ENCODE measurements at regions of chr1 and their contacts with region 1.

Region 1: GRCh38 chr1:40774266-40774998 is 9.2 kb upstream of the KCNQ4 start:
- DNase-seq: peak; percentile 53
- ATAC-seq: peak; percentile 66
- H3K4me3 Mint-ChIP-seq: no peak overlapping the region
- H3K27ac Mint-ChIP-seq: no peak overlapping the region
- H3K4me1 Mint-ChIP-seq: no peaks in the 10 kb centered on the region
- H3K27me3 Mint-ChIP-seq: no peaks in the 10 kb centered on the region
- CTCF ChIP-seq: peak; percentile 57

Region 2: GRCh38 chr1:38997034-38997900 is 1777.2 kb before region 1 on chr1:
- CTCF ChIA-PET with region 1: no interaction called
- POLR2A ChIA-PET with region 1: no interaction called
- intact Hi-C with region 1: no loop called
- DNase-seq: no peak
- ATAC-seq: no peak
- H3K4me3 Mint-ChIP-seq: no peak overlapping the region
- H3K27ac Mint-ChIP-seq: peak overlapping the region; percentile 30
- H3K4me1 Mint-ChIP-seq: peaks cover 39% of the 10 kb centered on the region
- H3K27me3 Mint-ChIP-seq: no peaks in the 10 kb centered on the region
- CTCF ChIP-seq: no peak

Region 3: DNA sequence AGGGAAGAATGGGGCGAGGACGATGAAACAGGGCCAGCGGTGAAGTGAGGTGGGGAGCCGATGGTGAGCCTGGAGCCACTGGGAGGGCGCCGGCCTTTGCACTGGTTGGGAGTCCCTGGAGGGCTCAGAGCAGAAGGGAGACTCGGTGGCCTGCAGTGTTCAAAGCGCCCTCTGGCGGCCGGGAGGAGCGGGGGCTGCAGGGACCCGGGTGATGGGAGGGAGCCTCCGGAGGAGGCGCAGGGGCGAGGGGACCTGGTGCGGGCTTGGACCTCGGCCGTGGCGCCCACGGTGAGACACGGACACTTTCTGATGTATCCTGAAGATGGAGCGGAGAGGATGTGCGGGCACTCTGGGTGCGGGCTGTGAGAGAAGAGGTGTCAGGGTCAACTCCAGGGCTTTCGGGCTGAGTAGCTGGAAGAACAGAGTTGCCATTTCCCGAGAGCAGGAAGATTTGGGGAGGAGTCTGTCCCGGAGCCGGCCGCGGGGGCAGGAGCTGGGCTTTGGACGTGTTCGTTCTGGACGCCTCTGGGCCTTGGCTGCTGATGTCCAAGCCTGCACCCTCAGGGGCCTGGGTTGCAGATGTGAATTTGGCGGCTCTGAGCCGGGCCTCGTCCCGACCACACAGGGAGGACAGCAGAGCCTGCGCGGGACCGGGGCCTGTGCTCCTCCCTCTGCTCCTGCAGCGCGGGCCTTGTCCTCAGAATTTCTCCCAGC is 1164.7 kb before region 1 on chr1:
- CTCF ChIA-PET with region 1: no interaction called
- POLR2A ChIA-PET with region 1: no interaction called
- intact Hi-C with region 1: no loop called
- DNase-seq: peak; percentile 62
- ATAC-seq: peak; percentile 84
- H3K4me3 Mint-ChIP-seq: no peak overlapping the region
- H3K27ac Mint-ChIP-seq: no peak overlapping the region
- H3K4me1 Mint-ChIP-seq: peaks cover 11% of the 10 kb centered on the region
- H3K27me3 Mint-ChIP-seq: peaks cover 9% of the 10 kb centered on the region
- CTCF ChIP-seq: no peak

Region 4: GRCh38 chr1:40583980-40584379 is 190.5 kb before region 1 on chr1:
- CTCF ChIA-PET with region 1: no interaction called
- POLR2A ChIA-PET with region 1: no interaction called
- intact Hi-C with region 1: no loop called
- DNase-seq: no peak
- ATAC-seq: no peak
- H3K4me3 Mint-ChIP-seq: no peak overlapping the region
- H3K27ac Mint-ChIP-seq: no peak overlapping the region
- H3K4me1 Mint-ChIP-seq: no peaks in the 10 kb centered on the region
- H3K27me3 Mint-ChIP-seq: peaks cover 2% of the 10 kb centered on the region
- CTCF ChIP-seq: no peak

Region 5: DNA sequence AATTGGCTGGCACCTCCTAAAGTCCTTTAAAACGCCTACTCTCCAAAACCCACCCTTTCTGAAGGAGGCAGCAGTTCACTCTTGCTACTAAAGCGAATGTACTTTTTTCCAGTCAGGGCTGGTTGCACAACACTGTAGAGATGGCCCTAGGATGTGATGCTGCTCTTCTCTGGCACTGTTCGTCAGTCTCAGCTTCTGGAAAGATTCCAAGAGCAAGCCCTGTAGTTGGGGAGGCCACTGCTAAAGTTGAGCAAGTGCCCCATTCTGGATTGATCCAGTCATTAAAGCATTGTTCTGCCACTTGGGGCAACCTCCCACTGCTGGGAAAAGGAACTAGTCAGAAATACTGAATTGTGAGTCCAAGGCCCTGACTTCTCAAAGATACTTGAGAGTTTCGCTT is 19.4 kb before region 1 on chr1:
- CTCF ChIA-PET with region 1: interaction called, 15 read pairs
- POLR2A ChIA-PET with region 1: no interaction called
- intact Hi-C with region 1: no loop called
- DNase-seq: no peak
- ATAC-seq: no peak
- H3K4me3 Mint-ChIP-seq: no peak overlapping the region
- H3K27ac Mint-ChIP-seq: no peak overlapping the region
- H3K4me1 Mint-ChIP-seq: peaks cover 11% of the 10 kb centered on the region
- H3K27me3 Mint-ChIP-seq: no peaks in the 10 kb centered on the region
- CTCF ChIP-seq: no peak

Region 6: DNA sequence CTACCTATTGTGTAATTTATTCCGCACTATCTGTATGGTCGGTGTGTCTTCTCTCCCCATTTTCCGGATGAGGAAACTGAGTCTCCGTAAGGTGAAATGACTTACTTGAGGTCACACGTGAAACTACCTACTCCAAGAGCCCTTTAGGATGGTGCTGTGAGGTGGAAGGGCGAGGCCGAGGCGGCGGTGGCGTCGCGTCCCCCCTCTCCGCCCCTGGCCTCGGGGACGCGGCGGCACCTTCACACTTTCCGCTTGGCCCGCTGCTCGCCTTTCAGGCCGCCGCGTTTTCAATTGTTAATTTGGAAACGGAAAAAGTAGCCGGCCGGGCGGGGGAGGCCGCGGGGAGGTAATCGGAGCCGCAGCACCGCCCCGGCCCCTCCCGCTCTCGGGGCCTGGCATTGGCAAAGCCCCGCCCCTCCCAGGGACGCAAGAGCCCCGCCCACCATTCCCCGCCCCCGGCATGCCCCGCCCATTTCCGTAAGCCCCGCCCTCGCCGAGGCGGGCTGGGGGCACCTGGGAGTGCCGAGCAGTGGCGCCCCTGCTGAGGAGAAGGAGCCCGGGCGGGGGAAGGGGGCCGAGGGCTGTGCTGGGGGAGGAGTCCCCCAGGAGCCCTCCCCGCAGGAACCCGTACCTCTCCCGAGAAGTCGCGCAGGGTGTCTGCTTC is 27.8 kb after region 1 on chr1:
- CTCF ChIA-PET with region 1: no interaction called
- POLR2A ChIA-PET with region 1: no interaction called
- intact Hi-C with region 1: loop called (anchors 5 kb)
- DNase-seq: peak; percentile 75
- ATAC-seq: peak; percentile 96
- H3K4me3 Mint-ChIP-seq: peak overlapping the region; percentile 77
- H3K27ac Mint-ChIP-seq: peak overlapping the region; percentile 68
- H3K4me1 Mint-ChIP-seq: peaks cover 33% of the 10 kb centered on the region
- H3K27me3 Mint-ChIP-seq: no peaks in the 10 kb centered on the region
- CTCF ChIP-seq: no peak

Region 7: DNA sequence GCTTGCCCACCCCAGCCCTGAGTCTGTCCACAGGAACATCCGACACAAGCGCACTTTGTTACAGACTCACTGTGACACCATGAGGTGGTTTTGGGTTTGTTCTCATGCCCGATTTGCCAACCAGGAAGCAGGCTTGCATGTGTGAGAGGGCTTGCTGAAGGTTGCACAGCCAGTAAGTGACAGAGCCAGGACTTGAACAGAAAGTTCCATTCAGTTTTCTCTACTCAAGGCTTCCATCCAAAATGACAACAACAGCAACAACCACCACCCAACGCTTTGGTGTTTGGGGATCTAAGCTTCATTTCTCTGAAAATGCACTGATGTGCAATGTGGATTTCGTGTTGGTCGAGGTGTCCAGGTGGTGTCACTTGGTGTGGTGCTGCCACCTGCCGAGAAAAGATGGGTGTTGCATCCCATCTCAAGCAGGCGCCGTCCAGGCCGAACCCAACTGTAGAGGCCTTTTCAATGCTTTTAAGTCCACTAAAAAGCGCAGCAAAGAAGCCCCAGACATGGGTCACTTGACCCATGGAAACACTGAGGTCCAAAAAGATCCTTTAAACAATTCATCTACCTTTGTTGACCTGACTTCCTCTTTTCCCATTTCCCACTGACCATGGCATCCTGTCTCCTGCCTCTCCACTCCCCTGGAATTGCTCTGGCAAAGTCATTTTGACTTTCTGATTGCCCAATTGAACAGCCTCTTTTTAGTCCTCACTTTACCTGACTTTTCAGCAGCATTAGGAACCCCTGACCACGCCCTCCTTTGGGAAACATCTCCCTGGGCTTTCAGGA is 75.6 kb after region 1 on chr1:
- CTCF ChIA-PET with region 1: interaction called, 82 read pairs
- POLR2A ChIA-PET with region 1: interaction called, 3 read pairs
- intact Hi-C with region 1: loop called (anchors 1 kb)
- DNase-seq: peak; percentile 67
- ATAC-seq: peak; percentile 97
- H3K4me3 Mint-ChIP-seq: no peak overlapping the region
- H3K27ac Mint-ChIP-seq: no peak overlapping the region
- H3K4me1 Mint-ChIP-seq: peaks cover 10% of the 10 kb centered on the region
- H3K27me3 Mint-ChIP-seq: no peaks in the 10 kb centered on the region
- CTCF ChIP-seq: peak; percentile 46

Region 8: DNA sequence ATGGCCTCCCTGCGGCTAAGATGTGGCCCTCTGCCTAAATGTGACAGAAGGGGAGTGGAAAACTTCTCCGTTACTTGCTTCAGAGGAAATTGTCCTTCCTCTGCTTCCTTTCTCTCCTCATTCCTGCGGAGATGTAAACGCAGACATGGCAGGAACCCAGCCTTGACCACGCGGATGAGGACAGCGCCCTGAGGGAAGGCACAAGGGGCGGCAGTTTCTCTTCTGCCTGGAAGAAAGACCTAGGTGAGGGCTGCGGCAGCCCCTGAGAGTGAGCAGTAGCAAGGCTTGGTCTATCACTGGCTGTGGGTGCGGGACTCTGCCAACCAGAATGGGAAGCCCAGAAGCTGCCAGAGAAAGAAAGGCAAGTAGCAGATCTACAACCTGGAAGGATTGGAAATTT is 191.1 kb after region 1 on chr1:
- CTCF ChIA-PET with region 1: no interaction called
- POLR2A ChIA-PET with region 1: no interaction called
- intact Hi-C with region 1: no loop called
- DNase-seq: no peak
- ATAC-seq: no peak
- H3K4me3 Mint-ChIP-seq: no peak overlapping the region
- H3K27ac Mint-ChIP-seq: no peak overlapping the region
- H3K4me1 Mint-ChIP-seq: peaks cover 4% of the 10 kb centered on the region
- H3K27me3 Mint-ChIP-seq: no peaks in the 10 kb centered on the region
- CTCF ChIP-seq: no peak

Measured in activated B cell treated with CpG ODN at 0.5 μM for 24 hours (primary cell).